K562 (cell line): ENCODE measurements at regions of chr2 and their contacts with region 1.

Region 1: DNA sequence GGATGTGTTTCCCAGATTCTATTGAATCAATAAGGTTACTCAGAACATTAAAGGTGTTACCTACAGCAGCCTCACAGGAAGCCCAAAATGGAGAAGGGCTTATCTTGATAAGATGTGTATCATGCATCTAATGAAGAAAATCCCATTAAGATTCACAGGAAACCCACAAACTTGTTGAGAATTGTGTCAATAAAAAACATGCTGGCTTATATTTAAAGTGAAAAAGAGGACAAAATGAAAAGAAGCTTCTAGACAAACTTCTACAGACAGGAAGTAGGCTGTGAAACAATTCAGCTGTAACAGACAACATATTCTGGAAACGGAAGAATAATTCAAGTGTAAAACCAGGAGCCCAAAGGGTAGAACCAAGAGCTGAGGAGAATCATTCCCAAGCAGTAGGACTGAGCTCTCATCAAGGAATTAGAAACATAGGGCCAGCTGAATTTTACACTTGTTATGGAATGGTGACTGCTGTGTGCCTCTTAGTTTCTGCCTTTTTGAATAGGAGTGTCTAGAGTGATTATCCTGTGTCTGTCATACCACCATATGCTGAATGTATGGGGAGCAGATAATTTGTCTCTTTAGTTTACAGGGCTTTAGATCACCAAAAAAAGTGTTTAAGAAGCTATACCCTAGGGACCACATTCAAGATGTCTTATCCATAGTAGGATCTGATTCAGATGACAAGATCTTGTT is 9.6 kb downstream of the IMMT start:
- DNase-seq: no peak
- ATAC-seq: peak; percentile 21; the same call in 2 of the 3 replicates
- H3K4me3 ChIP-seq: no peak overlapping the region
- H3K27ac ChIP-seq: peak overlapping the region; percentile 19
- H3K4me1 ChIP-seq: peaks cover 14 to 60% of the 10 kb centered on the region in 2 experiments
- H3K27me3 ChIP-seq: no peaks in the 10 kb centered on the region
- CTCF ChIP-seq: no peak
- EP300 ChIP-seq: no peak
- POLR2A ChIP-seq: no peak
- RAD21 ChIP-seq: no peak

Region 2: DNA sequence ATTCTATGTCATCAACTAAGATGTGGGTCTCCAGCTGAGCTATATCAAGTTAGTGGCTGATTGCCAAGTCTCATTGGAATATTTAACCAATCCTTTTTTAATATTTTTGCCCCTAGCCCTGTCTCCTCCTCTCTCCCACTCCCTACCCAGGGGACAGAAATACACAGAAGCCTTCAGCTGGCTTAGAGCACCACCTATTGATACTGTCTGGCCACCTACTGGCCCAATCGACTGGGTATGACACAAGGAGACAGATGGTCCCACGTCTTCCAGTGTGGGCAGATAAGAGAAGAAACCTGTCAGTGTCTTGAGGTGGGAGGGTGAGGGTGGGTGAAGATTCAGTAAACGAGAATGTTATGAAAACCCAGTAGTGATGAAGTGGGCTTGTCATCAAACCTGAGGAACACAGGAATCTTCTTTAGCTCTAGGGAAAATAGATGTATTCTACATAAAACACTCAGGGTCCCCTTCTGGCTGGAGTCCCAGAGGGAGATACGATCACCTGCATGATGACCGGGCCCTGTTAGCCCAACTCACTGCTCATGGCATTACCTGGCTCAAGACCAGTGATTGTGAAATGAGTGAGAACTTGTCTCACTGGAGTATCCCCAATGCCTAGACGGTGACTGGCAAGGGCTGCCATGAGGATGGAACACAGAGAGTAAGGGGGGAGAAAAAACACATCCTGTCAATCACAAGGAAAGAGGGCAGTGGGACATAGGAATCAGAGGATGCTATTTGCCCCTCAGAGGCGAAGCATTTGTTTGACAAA is 106.7 kb before region 1 on chr2:
- CTCF ChIA-PET with region 1: no interaction called
- POLR2A ChIA-PET with region 1: no interaction called
- in situ Hi-C with region 1: no loop called
- intact Hi-C with region 1: no loop called
- DNase-seq: peak in 1 of 4 experiments; percentile 32
- ATAC-seq: peak; percentile 82
- H3K4me3 ChIP-seq: no peak overlapping the region
- H3K27ac ChIP-seq: no peak overlapping the region
- H3K4me1 ChIP-seq: no peaks in the 10 kb centered on the region; a peak in 1 of 5 replicates
- H3K27me3 ChIP-seq: no peaks in the 10 kb centered on the region
- CTCF ChIP-seq: peak; percentile 39 to 73 (median 68)
- EP300 ChIP-seq: no peak
- POLR2A ChIP-seq: no peak
- RAD21 ChIP-seq: peak; percentile 78 to 88

Region 3: DNA sequence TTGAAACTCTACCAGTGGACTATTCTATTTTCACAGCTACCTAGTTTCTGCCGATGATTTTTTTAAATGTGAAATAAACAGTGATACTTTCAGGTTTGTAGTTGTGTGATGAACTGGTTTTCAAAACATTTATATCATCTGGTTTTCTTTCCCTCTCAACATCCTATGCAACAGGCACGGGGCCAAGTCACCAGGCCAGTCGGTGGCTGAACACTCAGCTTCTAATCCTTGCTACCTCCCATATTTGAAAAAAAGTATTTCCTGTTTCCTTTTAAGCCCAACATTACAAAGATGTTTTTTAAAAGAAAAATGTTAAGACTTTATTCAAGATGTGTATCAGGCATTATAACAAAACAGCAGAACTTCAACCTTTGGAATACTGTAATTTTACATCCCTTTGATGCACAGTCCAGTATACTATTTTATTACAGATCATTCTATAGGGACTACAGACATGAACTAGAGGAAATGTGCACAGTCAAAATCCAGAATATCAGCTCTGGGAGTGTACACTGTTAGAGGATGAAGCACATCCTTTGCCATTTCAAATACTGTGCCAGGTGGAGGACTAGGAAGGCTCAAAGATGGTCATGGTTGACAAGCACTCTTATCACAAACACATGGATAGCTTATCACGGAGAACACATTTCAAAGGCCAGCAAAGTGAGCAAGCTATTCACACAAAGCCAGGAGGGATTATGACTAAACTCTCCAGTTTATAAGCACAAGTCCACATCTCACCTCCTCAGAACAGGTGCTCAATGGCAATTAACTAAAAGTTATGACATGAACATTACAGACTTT is 28.2 kb after region 1 on chr2:
- CTCF ChIA-PET with region 1: no interaction called
- POLR2A ChIA-PET with region 1: interaction called, 3 read pairs
- in situ Hi-C with region 1: no loop called
- intact Hi-C with region 1: loop called (anchors 1 kb)
- DNase-seq: peak; percentile 71 to 84 (median 74)
- ATAC-seq: peak; percentile 75
- H3K4me3 ChIP-seq: no peak overlapping the region
- H3K27ac ChIP-seq: peak overlapping the region; percentile 47
- H3K4me1 ChIP-seq: peaks cover 20 to 50% of the 10 kb centered on the region in 2 experiments; a peak in 3 of 5 replicates
- H3K27me3 ChIP-seq: no peaks in the 10 kb centered on the region
- CTCF ChIP-seq: no peak
- EP300 ChIP-seq: peak; percentile 95
- POLR2A ChIP-seq: no peak
- RAD21 ChIP-seq: no peak; a peak in 1 of 4 replicates